A673 (cell line): ENCODE measurements at regions of chr20 and their contacts with region 1.

Region 1: GRCh38 chr20:9342651-9343050 is 171.7 kb upstream of the LAMP5 start:
- DNase-seq: no peak
- H3K4me3 ChIP-seq: no peak overlapping the region
- H3K27ac ChIP-seq: no peak overlapping the region
- H3K4me1 ChIP-seq: peaks cover 15% of the 10 kb centered on the region
- H3K27me3 ChIP-seq: no peaks in the 10 kb centered on the region
- CTCF ChIP-seq: no peak

Region 2: GRCh38 chr20:9294053-9294452 is 48.6 kb before region 1 on chr20:
- CTCF ChIA-PET with region 1: no interaction called
- POLR2A ChIA-PET with region 1: no interaction called
- intact Hi-C with region 1: no loop called
- DNase-seq: no peak
- H3K4me3 ChIP-seq: no peak overlapping the region
- H3K27ac ChIP-seq: no peak overlapping the region
- H3K4me1 ChIP-seq: no peaks in the 10 kb centered on the region
- H3K27me3 ChIP-seq: no peaks in the 10 kb centered on the region
- CTCF ChIP-seq: no peak

Region 3: DNA sequence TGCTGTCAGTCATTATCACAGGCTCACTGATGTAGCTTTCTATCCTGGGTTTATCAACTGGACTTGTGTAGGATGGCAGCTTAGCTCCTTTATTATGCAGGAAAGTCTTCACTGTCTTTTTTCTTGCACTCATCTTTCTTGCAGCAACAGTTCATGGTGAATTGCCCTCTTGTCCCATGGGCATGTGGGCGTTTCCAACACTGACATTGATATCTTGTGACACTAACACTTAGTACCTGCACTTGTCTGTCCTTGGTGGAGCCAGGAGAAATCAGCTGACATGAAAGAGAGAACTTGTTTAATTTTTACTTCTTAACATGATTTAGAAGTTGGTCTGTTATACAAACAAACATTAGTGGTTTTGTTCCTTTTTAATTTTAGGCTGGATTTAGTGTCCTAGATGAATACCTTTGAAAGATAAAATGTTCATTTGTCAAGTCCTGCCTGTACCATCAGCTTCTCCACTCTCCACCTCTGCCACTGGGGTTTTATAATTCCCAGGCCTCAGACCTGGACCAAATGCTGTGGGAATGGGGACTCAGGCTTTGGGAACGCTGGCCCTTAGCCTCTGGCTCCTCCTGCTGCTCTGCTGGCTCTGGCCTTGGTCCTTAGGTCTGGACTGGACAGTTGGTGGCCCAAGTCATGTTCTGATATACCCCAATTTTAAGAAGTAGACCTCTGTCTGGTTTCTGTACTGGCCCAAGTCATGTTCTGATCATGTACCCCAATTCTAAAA is 10.7 kb after region 1 on chr20:
- CTCF ChIA-PET with region 1: no interaction called
- POLR2A ChIA-PET with region 1: interaction called, 10 read pairs
- intact Hi-C with region 1: no loop called
- DNase-seq: no peak
- H3K4me3 ChIP-seq: no peak overlapping the region
- H3K27ac ChIP-seq: no peak overlapping the region
- H3K4me1 ChIP-seq: no peaks in the 10 kb centered on the region
- H3K27me3 ChIP-seq: no peaks in the 10 kb centered on the region
- CTCF ChIP-seq: no peak